HepG2 (cell line): ENCODE measurements at regions of chr11 and their contacts with region 1.

Region 1: DNA sequence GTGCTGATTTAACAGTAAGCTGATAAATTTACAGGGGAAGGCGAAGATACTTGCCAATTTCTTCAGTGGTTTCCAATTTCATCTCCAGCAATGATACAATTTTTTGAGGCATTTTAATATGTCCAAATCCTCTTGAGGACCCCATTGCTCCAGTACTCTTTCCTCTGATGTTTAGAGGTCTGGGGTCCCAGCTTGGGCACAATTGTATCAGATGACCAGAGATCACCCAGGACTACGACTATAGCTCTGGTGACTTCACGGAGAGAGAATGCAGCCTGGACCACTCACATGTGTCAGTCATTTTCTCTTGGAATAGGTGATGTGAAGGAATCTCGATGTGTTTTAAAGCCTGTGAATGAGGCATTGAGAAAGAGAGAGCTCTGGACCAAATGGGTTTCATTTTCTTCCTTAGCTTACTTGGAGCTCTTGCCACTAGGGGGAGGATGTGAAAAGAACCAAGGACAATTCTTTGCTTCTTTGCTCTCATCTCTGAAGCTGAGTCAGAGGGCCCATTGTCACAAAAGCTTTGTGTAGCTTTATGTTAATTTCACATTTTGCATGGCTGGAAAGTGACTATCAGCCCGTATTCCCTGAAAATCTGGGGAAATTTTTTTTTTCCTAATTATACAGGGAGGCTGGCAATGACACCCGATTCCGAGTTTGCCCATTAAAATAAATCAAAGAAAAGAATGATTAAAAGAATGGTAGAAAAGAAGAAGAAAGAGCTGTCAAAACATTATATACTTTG is 6.7 kb upstream of the CCDC90B start:
- DNase-seq: peak; percentile 57
- ATAC-seq: peak; percentile 87
- H3K4me3 ChIP-seq: no peak overlapping the region
- H3K27ac ChIP-seq: no peak overlapping the region
- H3K4me1 ChIP-seq: no peaks in the 10 kb centered on the region
- H3K27me3 ChIP-seq: no peaks in the 10 kb centered on the region
- CTCF ChIP-seq: peak; percentile 71
- EP300 ChIP-seq: no peak
- POLR2A ChIP-seq: no peak
- RAD21 ChIP-seq: no peak

Region 2: GRCh38 chr11:83205608-83206185 is 87.2 kb before region 1 on chr11:
- CTCF ChIA-PET with region 1: no interaction called
- POLR2A ChIA-PET with region 1: no interaction called
- in situ Hi-C with region 1: no loop called
- intact Hi-C with region 1: no loop called
- DNase-seq: no peak
- ATAC-seq: no peak
- H3K4me3 ChIP-seq: no peak overlapping the region
- H3K27ac ChIP-seq: no peak overlapping the region
- H3K4me1 ChIP-seq: no peaks in the 10 kb centered on the region
- H3K27me3 ChIP-seq: no peaks in the 10 kb centered on the region; a peak in 1 of 5 replicates
- CTCF ChIP-seq: no peak
- EP300 ChIP-seq: no peak
- POLR2A ChIP-seq: no peak
- RAD21 ChIP-seq: no peak

Region 3: DNA sequence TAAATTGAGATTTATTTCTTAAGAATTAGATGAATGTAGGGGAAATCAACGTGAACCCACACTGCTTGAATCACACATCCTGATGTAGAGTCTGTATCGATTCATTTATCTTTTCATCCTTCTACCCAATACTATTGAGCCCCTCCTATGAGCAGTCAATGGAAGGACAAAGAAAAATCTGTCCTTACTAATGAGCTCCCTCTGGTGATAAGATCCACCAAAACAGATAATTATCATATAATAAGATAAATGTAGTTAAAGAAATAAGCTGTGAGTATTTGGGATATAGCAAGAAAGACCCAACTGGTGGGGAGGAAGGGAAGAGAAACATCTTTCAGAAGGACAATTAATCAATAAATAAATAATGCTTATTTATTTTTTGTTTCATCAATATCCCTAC is 378.4 kb after region 1 on chr11:
- CTCF ChIA-PET with region 1: no interaction called
- POLR2A ChIA-PET with region 1: no interaction called
- in situ Hi-C with region 1: no loop called
- intact Hi-C with region 1: loop called (anchors 1 kb)
- DNase-seq: no peak
- ATAC-seq: no peak
- H3K4me3 ChIP-seq: no peak overlapping the region
- H3K27ac ChIP-seq: no peak overlapping the region
- H3K4me1 ChIP-seq: no peaks in the 10 kb centered on the region
- H3K27me3 ChIP-seq: no peaks in the 10 kb centered on the region
- CTCF ChIP-seq: no peak
- EP300 ChIP-seq: no peak
- POLR2A ChIP-seq: no peak
- RAD21 ChIP-seq: no peak

Region 4: DNA sequence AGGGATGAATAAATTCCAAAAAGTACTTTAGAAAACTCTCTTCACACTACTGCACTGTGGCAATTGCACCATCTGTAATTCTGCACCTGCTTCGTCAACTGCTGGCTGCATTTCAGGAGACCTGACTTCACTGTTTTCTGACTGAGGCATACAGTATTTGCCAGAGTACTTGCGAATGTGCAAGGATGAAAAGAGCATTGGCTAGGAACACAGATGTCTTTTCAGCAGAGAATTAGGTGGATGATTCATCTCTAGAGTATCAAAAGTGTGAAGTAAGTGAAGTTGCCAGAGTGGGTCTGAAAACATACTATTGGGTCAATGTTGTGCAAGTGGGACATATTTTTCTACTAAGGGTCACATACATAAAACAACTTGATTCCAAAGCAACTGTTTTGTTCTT is 420.8 kb after region 1 on chr11:
- CTCF ChIA-PET with region 1: no interaction called
- POLR2A ChIA-PET with region 1: no interaction called
- in situ Hi-C with region 1: loop called (anchors 10 kb)
- intact Hi-C with region 1: no loop called
- DNase-seq: no peak
- ATAC-seq: no peak
- H3K4me3 ChIP-seq: no peak overlapping the region
- H3K27ac ChIP-seq: no peak overlapping the region
- H3K4me1 ChIP-seq: peaks cover 7% of the 10 kb centered on the region; the same call in 1 of the 2 replicates
- H3K27me3 ChIP-seq: no peaks in the 10 kb centered on the region
- CTCF ChIP-seq: no peak
- EP300 ChIP-seq: no peak
- POLR2A ChIP-seq: no peak
- RAD21 ChIP-seq: no peak